Left cardiac atrium (tissue), 4 donors: ENCODE measurements at regions of chr18 and their contacts with region 1.

Region 1: DNA sequence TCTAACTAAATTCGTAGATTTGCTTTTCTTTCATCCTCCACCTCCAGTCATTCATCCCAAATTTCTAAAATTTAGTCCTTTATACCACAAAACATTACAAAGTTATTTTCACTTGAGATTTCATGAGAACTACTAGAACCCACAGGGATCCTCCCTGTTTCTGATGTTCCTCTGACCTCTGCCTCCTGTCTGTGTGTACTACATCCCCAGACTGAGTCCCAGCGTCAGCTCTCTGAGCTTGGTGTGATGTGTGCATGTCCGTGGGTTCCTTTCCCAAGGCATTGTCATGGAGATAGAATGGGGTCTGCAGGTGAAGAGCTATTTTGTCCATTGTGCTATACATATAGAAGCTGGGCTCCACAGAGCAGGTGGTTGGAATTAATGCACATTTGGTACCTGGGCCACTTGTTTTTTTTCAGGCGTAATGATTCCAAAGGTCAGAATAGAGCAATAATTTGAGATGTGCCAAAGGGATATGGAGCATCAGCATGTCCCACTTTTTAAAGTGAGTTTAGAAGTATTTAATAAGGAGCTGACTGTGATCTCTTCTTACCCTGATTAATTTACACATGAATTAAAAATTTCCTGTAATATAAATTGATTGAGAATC is 151.2 kb upstream of the BOD1L2 start:
- DNase-seq: no peak
- ATAC-seq: no peak

Region 2: DNA sequence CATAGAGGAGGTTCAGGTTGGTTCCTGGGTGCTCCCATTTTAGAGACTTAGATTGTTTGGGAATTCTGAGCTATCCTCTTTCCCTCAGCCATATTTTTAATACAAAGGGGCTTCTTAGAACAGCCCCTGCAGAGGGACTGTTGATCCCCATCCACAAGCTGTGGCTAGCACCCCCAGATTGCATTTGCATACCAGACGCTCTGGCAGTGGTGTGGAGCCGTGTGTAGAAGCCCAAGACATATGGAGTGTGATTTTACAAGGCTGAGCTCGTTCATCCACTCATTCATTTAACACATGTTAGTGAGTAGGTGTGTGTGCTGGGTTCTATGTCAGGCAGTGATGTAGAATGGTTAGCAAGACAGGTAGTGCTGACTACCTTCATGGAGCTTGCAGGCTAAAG is 15.5 kb before region 1 on chr18:
- intact Hi-C with region 1: loop called in 1 of 2 experiments (anchors 2 kb)
- DNase-seq: no peak
- ATAC-seq: no peak

Region 3: DNA sequence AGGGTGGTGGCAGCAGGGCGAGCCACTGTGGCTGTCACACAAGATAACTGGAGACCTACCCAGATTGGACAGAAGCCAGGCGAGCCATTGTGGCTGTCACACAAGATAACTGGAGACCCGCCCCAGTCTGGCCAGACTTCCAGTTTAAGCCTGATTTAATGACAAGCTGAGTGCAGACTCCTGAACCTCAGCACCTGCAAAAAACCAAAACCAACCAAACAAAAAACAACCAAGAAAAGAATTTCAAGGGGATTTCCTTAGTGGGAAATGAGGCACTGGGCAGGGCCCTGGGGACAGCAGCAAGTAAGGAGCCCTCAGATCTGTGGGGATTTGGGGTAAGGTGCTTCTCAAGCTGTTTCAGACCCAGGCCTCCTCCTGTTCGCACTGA is 56.0 kb after region 1 on chr18:
- intact Hi-C with region 1: no loop called
- DNase-seq: no peak
- ATAC-seq: no peak

Region 4: DNA sequence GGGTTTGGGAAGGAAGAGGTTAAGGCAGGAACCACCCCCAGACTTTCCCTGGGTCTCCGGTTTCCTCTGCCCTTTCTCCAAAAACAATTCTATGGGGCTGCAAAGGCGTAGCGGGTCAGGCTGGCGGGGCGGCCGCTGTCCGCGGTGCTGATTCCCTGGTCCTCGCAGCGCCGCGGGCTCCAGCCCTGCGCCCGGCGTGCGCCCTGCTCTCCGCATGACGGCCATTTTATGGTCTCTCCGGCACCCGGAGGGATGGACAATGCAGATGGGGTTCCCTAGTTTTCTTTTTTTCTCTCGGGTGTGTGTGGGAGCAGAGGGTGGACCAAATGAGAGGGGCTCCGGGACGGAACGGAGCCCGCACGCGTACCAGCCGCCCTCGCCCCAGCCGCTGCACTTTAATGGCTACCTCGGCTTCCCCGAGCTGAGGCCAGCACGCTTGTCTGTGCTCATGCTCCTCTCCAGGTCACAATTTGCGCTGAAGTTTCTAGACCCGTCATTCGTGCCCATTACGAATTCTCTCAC is 358.3 kb after region 1 on chr18:
- intact Hi-C with region 1: no loop called
- DNase-seq: peak; percentile 49
- ATAC-seq: peak; percentile 83 to 94